H1 (cell line): ENCODE measurements at regions of chr3 and their contacts with region 1.

Region 1: DNA sequence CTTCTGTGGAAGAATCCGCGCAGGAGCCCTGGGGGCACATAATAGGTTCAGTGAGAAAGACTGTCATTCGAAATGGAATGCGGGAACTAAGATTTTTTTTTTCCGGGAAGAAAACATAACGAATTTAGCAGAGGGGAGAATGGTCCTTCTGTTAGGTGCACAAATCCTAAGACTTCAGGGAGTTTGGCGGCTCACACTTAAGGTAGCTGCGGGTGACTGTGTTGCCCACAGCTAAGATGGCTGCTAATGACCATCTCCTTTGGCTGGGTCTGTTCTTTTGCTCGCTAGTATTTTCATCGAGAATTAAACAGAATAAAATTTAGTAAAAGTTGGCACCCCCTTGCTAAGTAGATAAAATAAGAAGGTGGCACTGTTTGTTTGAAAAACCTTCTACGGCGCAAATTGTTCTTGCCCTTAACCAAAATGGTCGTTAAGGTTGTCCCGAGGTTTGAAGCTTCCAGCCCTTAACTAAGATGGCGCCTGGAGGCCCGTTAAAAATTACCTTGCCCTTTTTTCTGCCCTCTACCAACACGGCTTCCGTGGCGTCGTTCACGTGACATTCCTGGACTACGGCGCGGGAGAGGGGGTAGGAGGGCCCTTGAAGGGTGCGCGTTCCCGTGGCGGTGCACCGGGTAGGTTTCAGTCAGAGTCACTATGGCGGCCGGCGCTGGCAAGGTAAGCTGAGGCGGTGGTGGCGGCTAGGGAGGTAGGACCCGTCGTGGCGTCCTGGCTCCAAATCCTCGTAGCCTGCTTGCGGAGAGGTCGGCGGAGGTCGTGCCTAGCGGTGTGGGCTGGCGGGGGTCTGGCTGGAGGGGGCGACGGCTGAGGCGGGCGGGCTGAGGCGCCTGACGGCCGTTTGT is at the start of gene SLMAP:
- DNase-seq: peak; percentile 87 to 93
- H3K4me3 ChIP-seq: peak within 1 kb of the TSS; percentile 69 to 92 (median 86)
- H3K27ac ChIP-seq: peak within 1 kb of the TSS; percentile 94
- H3K4me1 ChIP-seq: peaks cover 0 to 7% (median under 1%) of the 10 kb centered on the region in 4 experiments; a peak in 2 of 7 replicates
- H3K27me3 ChIP-seq: no peaks in the 10 kb centered on the region
- CTCF ChIP-seq: no peak
- EP300 ChIP-seq: no peak
- POLR2A ChIP-seq: peak; percentile 92
- RAD21 ChIP-seq: no peak
- total RNA-seq, gene SLMAP: 67.6 and 70.4 TPM in 2 replicates

Region 2: DNA sequence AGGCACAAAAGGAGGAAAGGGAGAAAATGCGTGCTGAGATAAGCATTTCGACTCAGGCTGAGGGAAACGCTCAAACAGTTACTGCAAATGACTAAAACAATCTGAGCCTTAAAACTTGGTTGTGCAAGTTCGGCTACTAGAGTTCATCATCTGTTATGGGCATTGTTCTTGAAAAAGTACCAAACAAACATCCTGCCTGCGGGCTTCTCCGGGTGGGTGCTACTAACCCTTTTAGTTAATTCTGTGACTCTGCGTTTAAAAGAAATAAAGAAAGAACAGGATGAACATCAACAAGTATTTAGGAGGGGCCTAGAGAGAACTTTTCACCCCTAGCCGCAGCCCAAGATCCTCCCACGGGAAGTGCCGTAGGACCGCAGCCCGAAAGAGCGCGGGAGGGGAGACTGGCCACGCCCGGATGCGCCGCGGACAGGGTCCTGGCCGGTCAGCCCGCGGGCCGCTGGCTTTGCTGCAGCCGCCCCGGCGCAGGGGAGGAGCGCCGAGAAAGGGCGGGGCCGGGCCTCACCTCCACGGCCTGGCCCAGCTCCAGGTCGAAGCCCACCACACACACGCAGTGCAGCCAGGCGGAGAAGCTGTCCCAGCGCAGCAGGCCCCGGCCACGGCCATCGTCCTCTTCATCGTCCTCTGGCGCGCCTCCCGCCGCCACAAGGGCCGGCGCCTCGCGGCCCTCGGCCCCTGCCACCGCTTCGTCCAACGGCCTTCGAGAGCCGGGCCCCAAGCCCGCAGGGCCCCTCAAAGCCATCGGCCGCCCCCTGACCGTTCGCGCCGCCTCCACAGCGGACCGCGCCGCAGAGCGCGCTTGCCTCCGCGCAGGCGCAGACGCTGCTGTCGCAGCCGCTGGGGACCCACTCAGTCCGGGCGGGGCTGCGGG is 63.4 kb before region 1 on chr3 and contains the start of gene DENND6A:
- CTCF ChIA-PET with region 1: no interaction called
- POLR2A ChIA-PET with region 1: interaction called, 12 read pairs
- DNase-seq: peak; percentile 78 to 93
- H3K4me3 ChIP-seq: peak within 1 kb of the TSS; percentile 61 to 90 (median 78)
- H3K27ac ChIP-seq: peak within 1 kb of the TSS; percentile 88
- H3K4me1 ChIP-seq: peaks cover 0 to 5% (median under 1%) of the 10 kb centered on the region in 4 experiments; a peak in 4 of 7 replicates
- H3K27me3 ChIP-seq: no peaks in the 10 kb centered on the region
- CTCF ChIP-seq: no peak
- EP300 ChIP-seq: no peak
- POLR2A ChIP-seq: peak in 1 of 2 experiments; percentile 96; a peak in 2 of 3 replicates
- RAD21 ChIP-seq: no peak
- total RNA-seq, gene DENND6A: 10.0 and 14.8 TPM in 2 replicates

Region 3: DNA sequence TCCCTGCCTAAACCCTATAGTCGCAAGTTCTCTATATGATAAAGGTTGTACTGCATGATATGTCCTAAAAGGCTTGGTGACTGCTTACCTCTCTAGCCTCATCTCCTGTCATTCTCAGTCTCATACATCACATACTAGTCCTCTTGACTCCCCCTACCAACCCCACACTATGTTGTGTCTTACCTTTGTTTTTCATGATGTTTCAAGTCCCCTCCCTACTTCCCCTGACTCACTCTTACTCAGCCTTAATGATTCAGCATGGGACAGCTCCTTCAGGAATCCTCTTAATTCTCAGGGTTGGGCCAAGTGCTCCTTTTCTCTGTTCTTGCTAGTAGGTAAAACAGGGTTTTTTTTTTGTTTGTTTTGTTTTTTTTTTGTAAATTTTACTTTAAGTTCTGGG is 49.8 kb after region 1 on chr3:
- CTCF ChIA-PET with region 1: no interaction called
- POLR2A ChIA-PET with region 1: no interaction called
- DNase-seq: peak in 1 of 2 experiments; percentile 27
- H3K4me3 ChIP-seq: no peak overlapping the region
- H3K27ac ChIP-seq: no peak overlapping the region
- H3K4me1 ChIP-seq: peaks cover 0 to 16% (median 8%) of the 10 kb centered on the region in 4 experiments; a peak in 5 of 7 replicates
- H3K27me3 ChIP-seq: no peaks in the 10 kb centered on the region
- CTCF ChIP-seq: no peak
- EP300 ChIP-seq: no peak
- POLR2A ChIP-seq: no peak
- RAD21 ChIP-seq: no peak

Region 4: GRCh38 chr3:57856675-57857074 is 100.8 kb after region 1 on chr3:
- CTCF ChIA-PET with region 1: interaction called, 11 read pairs
- POLR2A ChIA-PET with region 1: no interaction called
- DNase-seq: no peak
- H3K4me3 ChIP-seq: no peak overlapping the region
- H3K27ac ChIP-seq: no peak overlapping the region
- H3K4me1 ChIP-seq: no peaks in the 10 kb centered on the region
- H3K27me3 ChIP-seq: no peaks in the 10 kb centered on the region
- CTCF ChIP-seq: no peak
- EP300 ChIP-seq: no peak
- POLR2A ChIP-seq: no peak
- RAD21 ChIP-seq: peak in 1 of 2 experiments; percentile 26; a peak in 2 of 4 replicates